H1 (cell line): ENCODE measurements at regions of chr14 and their contacts with region 1.

Region 1: GRCh38 chr14:74401504-74402241 is 24.3 kb downstream of the SYNDIG1L start:
- DNase-seq: peak in 1 of 2 experiments; percentile 76
- H3K4me3 ChIP-seq: no peak overlapping the region
- H3K27ac ChIP-seq: no peak overlapping the region
- H3K4me1 ChIP-seq: peaks cover 3 to 34% (median 25%) of the 10 kb centered on the region in 4 experiments
- H3K27me3 ChIP-seq: no peaks in the 10 kb centered on the region
- CTCF ChIP-seq: no peak
- EP300 ChIP-seq: no peak
- POLR2A ChIP-seq: no peak
- RAD21 ChIP-seq: no peak

Region 2: DNA sequence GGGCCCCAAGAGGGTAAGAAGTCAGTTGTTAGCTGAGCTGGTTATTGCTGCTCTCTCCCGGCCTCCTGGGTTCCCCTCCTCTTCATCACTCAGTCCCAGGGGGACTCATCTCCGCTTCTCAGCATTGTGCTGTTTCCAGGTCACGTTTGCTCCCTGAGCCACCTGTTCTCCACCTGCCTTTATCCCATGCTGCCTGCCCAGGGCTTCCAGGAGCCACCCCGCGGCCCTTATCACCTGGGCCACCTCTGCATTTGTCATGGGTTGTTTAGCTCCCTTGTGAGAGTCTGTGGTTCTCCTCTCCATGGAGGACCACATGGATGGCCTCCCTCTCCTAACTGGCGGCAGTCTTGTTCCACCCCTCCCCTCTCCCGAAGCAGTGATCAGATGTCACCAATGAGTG is 11.7 kb before region 1 on chr14:
- CTCF ChIA-PET with region 1: interaction called, 19 read pairs
- POLR2A ChIA-PET with region 1: interaction called, 3 read pairs
- DNase-seq: no peak
- H3K4me3 ChIP-seq: no peak overlapping the region
- H3K27ac ChIP-seq: no peak overlapping the region
- H3K4me1 ChIP-seq: peaks cover 0 to 3% (median 0%) of the 10 kb centered on the region in 4 experiments; a peak in 1 of 7 replicates
- H3K27me3 ChIP-seq: peaks cover 0 to 2% (median 0%) of the 10 kb centered on the region in 4 experiments; a peak in 1 of 7 replicates
- CTCF ChIP-seq: no peak
- EP300 ChIP-seq: no peak
- POLR2A ChIP-seq: no peak
- RAD21 ChIP-seq: no peak

Region 3: GRCh38 chr14:74425525-74426201 is 24.0 kb after region 1 on chr14:
- CTCF ChIA-PET with region 1: interaction called, 14 read pairs
- POLR2A ChIA-PET with region 1: interaction called, 4 read pairs
- DNase-seq: peak in 1 of 2 experiments; percentile 94
- H3K4me3 ChIP-seq: peak overlapping the region; percentile 34 to 60 (median 51)
- H3K27ac ChIP-seq: no peak overlapping the region
- H3K4me1 ChIP-seq: peaks cover 27 to 39% (median 30%) of the 10 kb centered on the region in 4 experiments
- H3K27me3 ChIP-seq: peaks cover 0 to 12% (median 7%) of the 10 kb centered on the region in 4 experiments; a peak in 4 of 7 replicates
- CTCF ChIP-seq: no peak
- EP300 ChIP-seq: peak in 1 of 2 experiments; percentile 70; a peak in 1 of 3 replicates
- POLR2A ChIP-seq: no peak
- RAD21 ChIP-seq: no peak

Region 4: GRCh38 chr14:74437496-74438053 is 35.9 kb after region 1 on chr14:
- CTCF ChIA-PET with region 1: interaction called, 10 read pairs
- POLR2A ChIA-PET with region 1: interaction called, 3 read pairs
- DNase-seq: peak in 1 of 2 experiments; percentile 49
- H3K4me3 ChIP-seq: no peak overlapping the region
- H3K27ac ChIP-seq: no peak overlapping the region
- H3K4me1 ChIP-seq: peaks cover 2 to 12% (median 5%) of the 10 kb centered on the region in 4 experiments; a peak in 5 of 7 replicates
- H3K27me3 ChIP-seq: no peaks in the 10 kb centered on the region
- CTCF ChIP-seq: no peak
- EP300 ChIP-seq: no peak
- POLR2A ChIP-seq: no peak
- RAD21 ChIP-seq: 0 out of 4 replicates have a peak, but pooled peaks have one; percentile 4 to 10

Region 5: GRCh38 chr14:74469548-74470518 is 68.2 kb after region 1 on chr14:
- CTCF ChIA-PET with region 1: no interaction called
- POLR2A ChIA-PET with region 1: no interaction called
- DNase-seq: peak in 1 of 2 experiments; percentile 11
- H3K4me3 ChIP-seq: no peak overlapping the region
- H3K27ac ChIP-seq: no peak overlapping the region
- H3K4me1 ChIP-seq: no peaks in the 10 kb centered on the region
- H3K27me3 ChIP-seq: no peaks in the 10 kb centered on the region
- CTCF ChIP-seq: no peak
- EP300 ChIP-seq: no peak
- POLR2A ChIP-seq: no peak
- RAD21 ChIP-seq: no peak

Region 6: GRCh38 chr14:74514471-74514941 is 112.8 kb after region 1 on chr14:
- CTCF ChIA-PET with region 1: no interaction called
- POLR2A ChIA-PET with region 1: no interaction called
- DNase-seq: no peak
- H3K4me3 ChIP-seq: no peak overlapping the region
- H3K27ac ChIP-seq: no peak overlapping the region
- H3K4me1 ChIP-seq: peaks cover 4 to 23% (median 11%) of the 10 kb centered on the region in 4 experiments
- H3K27me3 ChIP-seq: no peaks in the 10 kb centered on the region; a peak in 1 of 7 replicates
- CTCF ChIP-seq: no peak
- EP300 ChIP-seq: no peak
- POLR2A ChIP-seq: no peak
- RAD21 ChIP-seq: no peak